ENCODE measurements at regions of chr13 and their contacts with region 1.

Region 1: DNA sequence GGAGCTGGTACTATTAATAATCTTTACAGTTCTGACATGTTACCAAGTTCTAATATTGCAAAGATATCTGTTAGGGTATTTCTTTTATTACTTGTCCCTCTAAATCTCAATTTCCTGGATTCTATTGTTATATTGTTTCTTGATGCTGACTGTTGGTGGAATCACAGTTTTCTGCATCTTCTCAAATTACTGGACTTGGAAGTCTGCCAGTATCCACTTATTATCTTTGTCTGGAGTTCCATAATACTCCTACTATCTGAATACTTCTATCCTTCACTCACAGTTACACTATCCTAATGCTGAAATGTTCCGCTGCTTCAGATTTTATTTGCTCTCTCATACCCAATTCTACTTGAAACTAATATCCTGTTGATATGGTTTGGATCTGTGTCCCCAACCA is 1985.7 kb upstream of the PRR20A start:
- DNase-seq: no peak
- ATAC-seq: no peak
- H3K4me3 ChIP-seq: no peak overlapping the region
- H3K27ac ChIP-seq: no peak overlapping the region
- H3K4me1 ChIP-seq: no peaks in the 10 kb centered on the region
- H3K27me3 ChIP-seq: no peaks in the 10 kb centered on the region
- CTCF ChIP-seq: no peak
- EP300 ChIP-seq: no peak
- POLR2A ChIP-seq: no peak
- RAD21 ChIP-seq: no peak

Region 2: DNA sequence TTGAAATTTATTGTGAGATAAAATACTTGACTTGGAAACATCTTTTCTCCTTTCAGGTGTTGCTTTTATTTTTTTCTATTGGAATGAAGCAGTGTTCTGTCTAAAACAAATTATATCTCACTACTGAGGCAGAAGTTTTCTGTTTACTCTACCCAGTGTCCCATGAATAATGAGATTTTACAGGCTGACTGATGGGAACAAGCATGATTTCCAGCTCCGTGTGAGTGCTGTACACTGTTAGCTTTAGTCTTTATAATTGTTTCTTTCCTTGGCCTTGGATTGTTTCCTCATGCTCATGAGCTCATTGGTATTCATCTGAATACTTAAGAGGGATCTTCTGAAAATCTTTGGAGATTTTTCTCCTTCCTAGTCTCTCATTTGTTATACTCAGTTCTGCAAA is 63.9 kb before region 1 on chr13:
- CTCF ChIA-PET with region 1: no interaction called
- POLR2A ChIA-PET with region 1: no interaction called
- RAD21 ChIA-PET with region 1: no interaction called
- SMC1A ChIA-PET with region 1: no interaction called
- in situ Hi-C with region 1: loop called (anchors 10 kb)
- intact Hi-C with region 1: no loop called
- DNase-seq: no peak
- ATAC-seq: no peak
- H3K4me3 ChIP-seq: no peak overlapping the region
- H3K27ac ChIP-seq: no peak overlapping the region
- H3K4me1 ChIP-seq: no peaks in the 10 kb centered on the region
- H3K27me3 ChIP-seq: no peaks in the 10 kb centered on the region
- CTCF ChIP-seq: no peak
- EP300 ChIP-seq: no peak
- POLR2A ChIP-seq: no peak
- RAD21 ChIP-seq: no peak

Region 3: GRCh38 chr13:55230570-55230908 is 75.5 kb after region 1 on chr13:
- CTCF ChIA-PET with region 1: no interaction called
- POLR2A ChIA-PET with region 1: no interaction called
- RAD21 ChIA-PET with region 1: no interaction called
- SMC1A ChIA-PET with region 1: no interaction called
- in situ Hi-C with region 1: no loop called
- intact Hi-C with region 1: no loop called
- DNase-seq: no peak
- ATAC-seq: no peak
- H3K4me3 ChIP-seq: no peak overlapping the region
- H3K27ac ChIP-seq: no peak overlapping the region
- H3K4me1 ChIP-seq: no peaks in the 10 kb centered on the region
- H3K27me3 ChIP-seq: no peaks in the 10 kb centered on the region
- CTCF ChIP-seq: no peak
- EP300 ChIP-seq: no peak
- POLR2A ChIP-seq: no peak
- RAD21 ChIP-seq: no peak